ENCODE measurements at regions of chr2 and their contacts with region 1.

Region 1: GRCh38 chr2:85538486-85539360 is at the start of gene MAT2A:
- DNase-seq: peak; percentile 96
- ATAC-seq: peak; percentile 93
- total RNA-seq, gene MAT2A: 116 TPM

Region 2: DNA sequence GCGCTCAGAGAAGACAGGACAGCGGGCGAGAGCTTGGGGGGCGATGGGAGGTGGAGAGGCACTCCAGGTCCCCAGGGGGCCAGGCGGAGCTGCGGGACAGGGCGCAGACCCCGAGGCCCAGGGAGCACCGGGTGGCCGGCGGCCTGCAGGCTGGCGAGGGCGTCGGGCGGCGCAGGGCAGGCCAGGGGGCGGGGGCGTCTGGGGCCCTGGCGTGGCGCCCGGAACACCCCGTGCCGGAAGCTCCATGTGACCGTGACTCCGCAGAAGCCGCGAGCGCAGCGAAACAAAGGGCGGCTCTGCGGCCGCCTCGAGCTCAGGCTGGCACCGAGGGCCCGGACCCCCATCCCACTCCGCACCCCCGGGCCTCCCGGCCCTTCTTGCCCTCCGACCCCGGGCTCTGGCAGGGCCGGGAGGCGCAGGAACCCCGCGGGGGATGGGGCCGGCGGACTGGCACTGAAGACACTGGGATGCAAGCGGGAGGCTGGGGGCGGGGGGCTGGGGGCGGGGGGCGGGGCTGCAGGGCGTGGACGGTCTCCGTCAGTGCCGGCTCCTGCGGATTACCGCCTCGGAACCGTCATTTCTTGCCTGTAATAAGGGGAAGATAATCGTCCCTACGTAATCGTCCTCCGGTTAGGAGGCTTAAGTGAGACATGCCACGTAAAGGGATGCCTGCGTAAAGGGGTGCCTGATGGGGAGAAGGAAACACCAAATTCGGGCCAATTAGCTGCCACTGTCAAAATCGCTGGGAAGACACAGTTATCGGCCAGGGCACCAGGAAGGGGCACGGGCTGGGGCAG is 101.0 kb before region 1 on chr2:
- intact Hi-C with region 1: loop called (anchors 5 kb)
- DNase-seq: peak; percentile 95
- ATAC-seq: peak; percentile 88

Region 3: DNA sequence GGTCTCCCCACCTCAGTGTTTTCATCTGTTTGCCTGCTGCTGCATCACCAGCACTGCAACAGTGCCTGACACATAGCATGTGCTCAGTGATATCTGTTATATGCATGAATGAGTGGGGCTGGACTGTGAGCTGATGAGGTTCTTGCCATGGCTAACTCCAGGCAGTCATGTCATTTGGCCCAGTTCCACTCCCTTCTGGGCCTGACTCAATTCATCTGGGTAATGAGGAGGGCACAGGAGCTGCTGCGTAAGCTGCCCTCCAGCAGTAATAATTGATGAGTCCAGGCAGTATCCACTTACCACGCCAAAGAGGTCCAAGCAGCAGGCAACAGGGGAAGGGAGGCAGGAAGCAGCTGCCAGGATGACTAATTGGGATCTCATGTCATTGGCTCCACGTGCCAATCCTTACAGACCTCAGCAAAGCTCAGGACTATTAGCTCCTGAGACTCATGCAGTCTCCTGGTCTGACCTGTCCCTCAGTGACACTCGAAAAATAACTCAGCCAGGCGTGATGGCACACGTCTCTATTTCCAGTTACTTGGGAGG is 33.9 kb before region 1 on chr2:
- intact Hi-C with region 1: loop called (anchors 5 kb)
- DNase-seq: peak; percentile 50
- ATAC-seq: peak; percentile 65

Measured in Right ventricle myocardium superior (tissue), 1 donor.